Naive thymus-derived CD4-positive, alpha-beta T cell (primary cell): ENCODE measurements at regions of chr1 and their contacts with region 1.

Region 1: GRCh38 chr1:78145105-78145580 is 99.4 kb downstream of the GIPC2 start:
- DNase-seq: peak in 5 of 9 donors; percentile 22 to 36 (median 31)
- ATAC-seq: peak; percentile 73
- H3K4me3 ChIP-seq: no peak overlapping the region
- H3K4me3 Mint-ChIP-seq: no peak overlapping the region
- H3K27ac ChIP-seq: no peak overlapping the region
- H3K27ac Mint-ChIP-seq: peak overlapping the region in 1 of 9 donors; percentile 50
- H3K4me1 ChIP-seq: peaks cover 0 to 4% of the 10 kb centered on the region in 2 donors
- H3K4me1 Mint-ChIP-seq: peaks cover 5 to 27% (median 11%) of the 10 kb centered on the region in 7 donors
- H3K27me3 ChIP-seq: no peaks in the 10 kb centered on the region
- H3K27me3 Mint-ChIP-seq: peaks cover 5 to 23% (median 15%) of the 10 kb centered on the region in 5 donors

Region 2: GRCh38 chr1:78081980-78082860 is 62.9 kb before region 1 on chr1:
- CTCF ChIA-PET with region 1: no interaction called
- POLR2A ChIA-PET with region 1: no interaction called
- intact Hi-C with region 1: no loop called
- DNase-seq: no peak
- ATAC-seq: no peak
- H3K4me3 ChIP-seq: no peak overlapping the region
- H3K4me3 Mint-ChIP-seq: no peak overlapping the region
- H3K27ac ChIP-seq: no peak overlapping the region
- H3K27ac Mint-ChIP-seq: no peak overlapping the region
- H3K4me1 ChIP-seq: no peaks in the 10 kb centered on the region
- H3K4me1 Mint-ChIP-seq: peaks cover 0 to 30% (median 14%) of the 10 kb centered on the region in 7 donors
- H3K27me3 ChIP-seq: peaks cover 0 to 3% of the 10 kb centered on the region in 2 donors
- H3K27me3 Mint-ChIP-seq: peaks cover 0 to 10% (median 4%) of the 10 kb centered on the region in 5 donors

Region 3: DNA sequence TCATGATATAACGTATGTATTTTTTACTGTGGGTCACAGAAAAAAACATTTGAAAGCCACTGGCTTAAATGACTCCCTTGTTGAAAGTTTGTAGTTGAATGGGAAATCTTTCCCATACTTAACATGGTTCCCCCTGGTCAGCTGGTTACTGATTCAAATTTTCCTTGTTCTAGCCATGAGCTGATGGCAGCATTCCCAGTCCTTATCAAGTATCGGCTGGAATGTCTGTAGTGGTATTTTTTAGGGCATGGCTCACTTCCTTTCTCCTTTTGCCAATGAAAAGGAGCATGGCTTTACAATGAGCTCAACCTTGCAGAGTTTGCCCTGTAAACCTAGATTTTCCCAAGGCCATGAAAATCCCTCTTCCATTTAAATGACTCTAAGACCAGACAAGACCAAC is 43.6 kb before region 1 on chr1:
- CTCF ChIA-PET with region 1: no interaction called
- POLR2A ChIA-PET with region 1: no interaction called
- intact Hi-C with region 1: loop called in 1 of 2 experiments (anchors 1 kb)
- DNase-seq: no peak
- ATAC-seq: no peak
- H3K4me3 ChIP-seq: no peak overlapping the region
- H3K4me3 Mint-ChIP-seq: no peak overlapping the region
- H3K27ac ChIP-seq: no peak overlapping the region
- H3K27ac Mint-ChIP-seq: no peak overlapping the region
- H3K4me1 ChIP-seq: no peaks in the 10 kb centered on the region
- H3K4me1 Mint-ChIP-seq: no peaks in the 10 kb centered on the region
- H3K27me3 ChIP-seq: no peaks in the 10 kb centered on the region
- H3K27me3 Mint-ChIP-seq: peaks cover 0 to 12% (median 5%) of the 10 kb centered on the region in 5 donors

Region 4: DNA sequence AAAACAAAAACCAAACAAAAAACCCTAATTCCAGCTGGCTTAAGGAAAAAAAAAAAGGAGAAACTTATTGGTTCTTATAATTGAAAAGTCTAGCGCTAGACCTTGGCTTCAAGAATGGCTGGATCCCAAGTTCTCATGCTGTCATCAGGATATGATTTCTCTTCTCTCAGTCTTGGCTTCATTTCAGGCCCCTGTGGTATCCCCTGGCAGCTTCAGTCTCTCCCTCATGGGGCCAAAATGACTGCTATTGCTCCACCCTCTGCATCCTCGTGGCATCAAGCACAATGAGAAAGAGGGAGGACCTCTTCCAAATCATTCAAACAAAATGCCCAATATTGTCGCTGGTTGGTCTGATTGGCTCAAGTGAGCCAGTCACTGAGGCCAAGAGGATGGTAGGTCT is 18.6 kb before region 1 on chr1:
- CTCF ChIA-PET with region 1: interaction called, 24 read pairs
- POLR2A ChIA-PET with region 1: interaction called, 6 read pairs
- intact Hi-C with region 1: loop called in 1 of 2 experiments (anchors 1 kb)
- DNase-seq: no peak
- ATAC-seq: no peak
- H3K4me3 ChIP-seq: no peak overlapping the region
- H3K4me3 Mint-ChIP-seq: no peak overlapping the region
- H3K27ac ChIP-seq: no peak overlapping the region
- H3K27ac Mint-ChIP-seq: no peak overlapping the region
- H3K4me1 ChIP-seq: no peaks in the 10 kb centered on the region
- H3K4me1 Mint-ChIP-seq: no peaks in the 10 kb centered on the region
- H3K27me3 ChIP-seq: no peaks in the 10 kb centered on the region
- H3K27me3 Mint-ChIP-seq: peaks cover 0 to 6% (median 0%) of the 10 kb centered on the region in 5 donors

Region 5: DNA sequence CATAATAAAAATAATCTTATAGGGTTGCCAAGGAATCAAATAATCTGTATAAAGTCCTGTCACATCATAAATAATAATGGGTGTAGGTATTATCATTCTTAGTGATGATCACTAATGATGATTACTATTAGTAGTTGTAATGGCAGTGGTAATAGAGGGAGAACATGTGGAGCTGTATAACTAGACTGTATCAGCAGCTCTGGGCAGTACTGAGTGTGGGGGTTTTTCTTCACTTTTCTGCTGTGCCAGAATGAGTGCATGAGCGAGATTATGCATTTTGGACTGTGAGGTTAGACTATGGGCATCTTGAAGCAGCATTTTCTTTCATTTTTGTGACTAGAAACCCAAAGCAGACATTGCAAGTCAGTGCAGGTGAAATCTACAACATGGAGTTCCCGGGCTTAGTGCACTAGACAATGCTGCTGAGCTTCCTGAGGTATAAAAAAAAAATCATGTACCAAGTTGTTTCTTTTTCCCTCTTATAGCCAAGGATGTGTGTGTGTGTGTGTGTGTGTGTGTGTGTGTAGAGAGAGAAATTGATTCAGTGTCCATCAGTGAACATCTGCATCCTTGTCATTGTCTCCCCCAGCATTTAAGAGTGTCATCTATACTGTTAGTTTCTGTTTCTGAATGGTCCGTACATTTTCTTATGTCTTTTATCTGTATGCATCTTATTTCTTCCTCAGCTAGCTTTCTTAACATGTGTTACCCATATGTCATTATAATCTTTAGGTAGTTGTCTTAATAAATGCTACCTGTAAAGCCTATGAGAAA is 12.8 kb before region 1 on chr1:
- CTCF ChIA-PET with region 1: interaction called, 24 read pairs
- POLR2A ChIA-PET with region 1: interaction called, 6 read pairs
- intact Hi-C with region 1: loop called in 1 of 2 experiments (anchors 1 kb)
- DNase-seq: no peak
- ATAC-seq: peak; percentile 22
- H3K4me3 ChIP-seq: no peak overlapping the region
- H3K4me3 Mint-ChIP-seq: no peak overlapping the region
- H3K27ac ChIP-seq: no peak overlapping the region
- H3K27ac Mint-ChIP-seq: no peak overlapping the region
- H3K4me1 ChIP-seq: no peaks in the 10 kb centered on the region
- H3K4me1 Mint-ChIP-seq: no peaks in the 10 kb centered on the region
- H3K27me3 ChIP-seq: no peaks in the 10 kb centered on the region
- H3K27me3 Mint-ChIP-seq: peaks cover 0 to 12% (median 0%) of the 10 kb centered on the region in 5 donors

Region 6: GRCh38 chr1:78250201-78250600 is 105.1 kb after region 1 on chr1:
- CTCF ChIA-PET with region 1: no interaction called
- POLR2A ChIA-PET with region 1: no interaction called
- intact Hi-C with region 1: no loop called
- DNase-seq: no peak
- ATAC-seq: no peak
- H3K4me3 ChIP-seq: no peak overlapping the region
- H3K4me3 Mint-ChIP-seq: no peak overlapping the region
- H3K27ac ChIP-seq: no peak overlapping the region
- H3K27ac Mint-ChIP-seq: no peak overlapping the region
- H3K4me1 ChIP-seq: no peaks in the 10 kb centered on the region
- H3K4me1 Mint-ChIP-seq: no peaks in the 10 kb centered on the region
- H3K27me3 ChIP-seq: no peaks in the 10 kb centered on the region
- H3K27me3 Mint-ChIP-seq: peaks cover 0 to 24% (median 20%) of the 10 kb centered on the region in 5 donors

Region 7: DNA sequence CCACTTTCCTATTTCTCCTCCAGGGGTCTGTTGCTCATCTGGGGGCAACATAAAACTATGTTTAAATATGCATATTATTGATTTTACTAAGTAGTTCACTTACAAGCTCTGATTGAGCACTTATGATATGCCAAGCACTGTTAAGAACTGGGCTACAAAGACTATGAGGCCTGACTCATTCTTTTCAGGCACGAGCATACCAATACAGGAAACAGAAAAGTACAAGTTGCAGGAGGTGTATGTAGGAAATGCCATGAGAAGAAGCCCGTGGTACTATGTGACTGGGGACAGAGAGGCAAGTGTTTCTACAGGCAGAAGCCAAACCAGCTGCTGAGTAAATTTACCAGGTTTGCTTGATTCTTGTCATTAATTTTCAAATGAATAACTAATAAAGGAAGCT is 225.2 kb after region 1 on chr1:
- CTCF ChIA-PET with region 1: no interaction called
- POLR2A ChIA-PET with region 1: no interaction called
- intact Hi-C with region 1: no loop called
- DNase-seq: no peak
- ATAC-seq: no peak
- H3K4me3 ChIP-seq: no peak overlapping the region
- H3K4me3 Mint-ChIP-seq: no peak overlapping the region
- H3K27ac ChIP-seq: no peak overlapping the region
- H3K27ac Mint-ChIP-seq: no peak overlapping the region
- H3K4me1 ChIP-seq: no peaks in the 10 kb centered on the region
- H3K4me1 Mint-ChIP-seq: no peaks in the 10 kb centered on the region
- H3K27me3 ChIP-seq: no peaks in the 10 kb centered on the region
- H3K27me3 Mint-ChIP-seq: peaks cover 0 to 10% (median 4%) of the 10 kb centered on the region in 5 donors

Region 8: GRCh38 chr1:78607334-78607927 is 462.3 kb after region 1 on chr1:
- CTCF ChIA-PET with region 1: interaction called, 3 read pairs
- POLR2A ChIA-PET with region 1: no interaction called
- intact Hi-C with region 1: loop called (anchors 1 kb)
- DNase-seq: no peak
- ATAC-seq: no peak
- H3K4me3 ChIP-seq: no peak overlapping the region
- H3K4me3 Mint-ChIP-seq: peak overlapping the region in 1 of 10 donors; percentile 48
- H3K27ac ChIP-seq: no peak overlapping the region
- H3K27ac Mint-ChIP-seq: peak overlapping the region in 2 of 9 donors; percentile 50 to 59
- H3K4me1 ChIP-seq: peaks cover 0 to 6% of the 10 kb centered on the region in 2 donors
- H3K4me1 Mint-ChIP-seq: peaks cover 0 to 11% (median 0%) of the 10 kb centered on the region in 7 donors
- H3K27me3 ChIP-seq: no peaks in the 10 kb centered on the region
- H3K27me3 Mint-ChIP-seq: peaks cover 0 to 34% (median 0%) of the 10 kb centered on the region in 5 donors

Region 9: DNA sequence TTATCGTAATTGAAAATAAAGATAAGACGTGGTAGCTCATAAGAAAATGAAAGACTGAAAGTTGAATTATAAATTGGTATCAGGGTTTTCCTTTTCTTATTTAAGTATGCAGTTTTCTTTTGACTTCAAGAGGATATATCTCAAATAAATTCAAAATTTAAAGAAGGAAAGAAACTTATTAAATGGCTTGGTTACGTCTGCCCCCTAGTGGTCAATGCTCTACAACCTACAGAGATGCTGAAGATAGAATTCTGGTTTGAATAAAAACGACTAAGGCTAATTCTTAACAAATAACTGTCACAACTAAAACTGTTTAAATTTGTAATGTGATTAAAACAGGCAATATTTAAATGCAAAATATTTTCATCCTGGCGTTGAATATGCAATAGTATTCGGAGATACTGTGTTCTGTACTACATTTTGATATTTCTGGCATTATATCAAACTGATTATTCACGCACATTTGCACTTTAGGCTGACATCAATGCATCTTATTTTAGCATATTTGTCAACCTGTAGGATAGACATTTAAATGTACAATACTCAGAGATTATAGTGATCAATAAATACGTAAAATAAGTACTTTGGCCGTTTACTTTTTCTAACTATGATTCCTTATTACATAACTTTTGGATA is 531.3 kb after region 1 on chr1:
- CTCF ChIA-PET with region 1: interaction called, 3 read pairs
- POLR2A ChIA-PET with region 1: no interaction called
- intact Hi-C with region 1: loop called (anchors 1 to 2 kb)
- DNase-seq: peak in 7 of 9 donors; percentile 38 to 72 (median 62)
- ATAC-seq: peak; percentile 67
- H3K4me3 ChIP-seq: no peak overlapping the region
- H3K4me3 Mint-ChIP-seq: no peak overlapping the region
- H3K27ac ChIP-seq: no peak overlapping the region
- H3K27ac Mint-ChIP-seq: no peak overlapping the region
- H3K4me1 ChIP-seq: no peaks in the 10 kb centered on the region
- H3K4me1 Mint-ChIP-seq: peaks cover 3 to 33% (median 6%) of the 10 kb centered on the region in 7 donors
- H3K27me3 ChIP-seq: no peaks in the 10 kb centered on the region
- H3K27me3 Mint-ChIP-seq: peaks cover 0 to 6% (median 0%) of the 10 kb centered on the region in 5 donors